ENCODE measurements at regions of chr10 and their contacts with region 1.

Region 1: GRCh38 chr10:33365871-33366411 is 31.5 kb upstream of the NRP1 start:
- DNase-seq: peak; percentile 61
- H3K4me3 Mint-ChIP-seq: no peak overlapping the region
- H3K27ac Mint-ChIP-seq: peak overlapping the region; percentile 81
- H3K4me1 Mint-ChIP-seq: peaks cover 30% of the 10 kb centered on the region
- H3K27me3 Mint-ChIP-seq: no peaks in the 10 kb centered on the region
- CTCF ChIP-seq: no peak

Region 2: DNA sequence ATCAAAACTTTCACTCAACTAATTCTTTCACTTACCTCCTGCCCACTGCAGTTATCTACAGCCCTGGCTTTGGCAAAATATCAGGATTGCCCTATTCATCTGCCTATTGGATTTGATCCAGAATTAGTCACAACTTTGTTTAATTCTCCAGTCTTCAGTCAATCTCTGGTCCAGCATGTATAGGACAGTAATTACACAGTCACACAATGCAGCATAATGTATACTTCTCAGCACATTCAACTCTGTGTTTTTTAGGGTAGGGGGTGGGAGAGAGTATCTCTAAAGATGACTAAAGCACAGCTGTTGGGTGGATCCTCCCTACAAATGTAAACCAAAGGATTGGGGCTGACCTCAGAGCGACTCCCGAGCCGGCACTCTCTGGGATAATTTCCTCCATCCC is 13.8 kb before region 1 on chr10:
- CTCF ChIA-PET with region 1: no interaction called
- POLR2A ChIA-PET with region 1: no interaction called
- intact Hi-C with region 1: no loop called
- DNase-seq: peak; percentile 81
- H3K4me3 Mint-ChIP-seq: no peak overlapping the region
- H3K27ac Mint-ChIP-seq: no peak overlapping the region
- H3K4me1 Mint-ChIP-seq: peaks cover 17% of the 10 kb centered on the region
- H3K27me3 Mint-ChIP-seq: no peaks in the 10 kb centered on the region
- CTCF ChIP-seq: no peak

Region 3: GRCh38 chr10:33412653-33413361 is 46.9 kb after region 1 on chr10:
- CTCF ChIA-PET with region 1: no interaction called
- POLR2A ChIA-PET with region 1: no interaction called
- intact Hi-C with region 1: loop called (anchors 2 kb)
- DNase-seq: peak; percentile 86
- H3K4me3 Mint-ChIP-seq: no peak overlapping the region
- H3K27ac Mint-ChIP-seq: peak overlapping the region; percentile 52
- H3K4me1 Mint-ChIP-seq: peaks cover 20% of the 10 kb centered on the region
- H3K27me3 Mint-ChIP-seq: no peaks in the 10 kb centered on the region
- CTCF ChIP-seq: no peak